Panc1 (cell line): ENCODE measurements at regions of chr2 and their contacts with region 1.

Region 1: GRCh38 chr2:219459460-219460311 is 25.0 kb downstream of the SPEG start:
- DNase-seq: peak; percentile 59
- ATAC-seq: peak; percentile 85
- H3K4me3 ChIP-seq: no peak overlapping the region
- H3K27ac ChIP-seq: no peak overlapping the region
- H3K4me1 ChIP-seq: peaks cover 3% of the 10 kb centered on the region; the same call in 1 of the 2 replicates
- H3K27me3 ChIP-seq: no peaks in the 10 kb centered on the region
- CTCF ChIP-seq: peak; percentile 95

Region 2: GRCh38 chr2:218257390-218257981 is 1202.2 kb before region 1 on chr2:
- CTCF ChIA-PET with region 1: interaction called, 10 read pairs
- POLR2A ChIA-PET with region 1: no interaction called
- in situ Hi-C with region 1: no loop called
- intact Hi-C with region 1: no loop called
- DNase-seq: no peak
- ATAC-seq: no peak
- H3K4me3 ChIP-seq: no peak overlapping the region
- H3K27ac ChIP-seq: no peak overlapping the region
- H3K4me1 ChIP-seq: peaks cover 8% of the 10 kb centered on the region; the same call in 1 of the 2 replicates
- H3K27me3 ChIP-seq: no peaks in the 10 kb centered on the region
- CTCF ChIP-seq: peak; percentile 77; the same call in 1 of the 2 replicates

Region 3: GRCh38 chr2:219509780-219510511 is 50.3 kb after region 1 on chr2:
- CTCF ChIA-PET with region 1: interaction called, 11 read pairs
- POLR2A ChIA-PET with region 1: no interaction called
- in situ Hi-C with region 1: no loop called
- intact Hi-C with region 1: no loop called
- DNase-seq: no peak
- ATAC-seq: peak; percentile 91
- H3K4me3 ChIP-seq: peak overlapping the region; percentile 33 to 49
- H3K27ac ChIP-seq: no peak overlapping the region
- H3K4me1 ChIP-seq: peaks cover 22% of the 10 kb centered on the region
- H3K27me3 ChIP-seq: no peaks in the 10 kb centered on the region; the same call in 1 of the 2 replicates
- CTCF ChIP-seq: peak; percentile 94

Region 4: DNA sequence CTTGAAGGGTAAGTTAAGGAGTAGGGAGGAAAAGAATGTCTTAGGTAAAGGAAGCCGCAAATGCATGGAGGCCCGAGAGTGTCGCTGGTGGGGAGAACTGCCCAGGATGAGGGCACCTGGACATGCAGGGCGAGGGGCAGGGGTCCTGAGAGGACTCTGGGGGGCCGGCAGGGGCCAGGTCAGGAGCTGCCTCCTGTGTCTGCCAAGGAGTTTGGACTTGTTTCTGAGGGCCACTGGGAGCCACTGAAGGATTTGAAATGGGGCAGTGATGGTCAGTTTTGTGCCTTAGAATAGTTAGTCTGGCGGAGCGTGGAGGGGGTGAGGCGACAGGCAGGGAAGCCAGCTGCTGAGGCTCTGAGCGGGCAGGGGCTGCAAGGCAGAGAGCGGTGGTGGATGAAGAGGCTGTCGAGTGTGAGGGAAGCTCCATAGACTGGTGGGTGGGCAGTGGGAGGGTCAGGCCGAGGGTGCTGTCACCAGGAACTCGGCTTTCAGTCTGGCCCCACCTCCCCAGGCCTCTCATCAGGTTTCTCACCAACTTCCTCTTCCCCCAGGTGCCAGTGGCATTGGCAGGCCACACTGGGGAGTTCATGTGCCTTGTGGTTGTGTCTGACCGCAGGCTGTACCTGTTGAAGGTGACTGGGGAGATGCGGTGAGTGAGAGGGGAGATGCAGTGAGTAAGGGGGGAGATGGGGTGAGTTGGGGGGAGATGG is 153.0 kb after region 1 on chr2:
- CTCF ChIA-PET with region 1: no interaction called
- POLR2A ChIA-PET with region 1: no interaction called
- in situ Hi-C with region 1: no loop called
- intact Hi-C with region 1: no loop called
- DNase-seq: no peak
- ATAC-seq: no peak
- H3K4me3 ChIP-seq: no peak overlapping the region
- H3K27ac ChIP-seq: no peak overlapping the region
- H3K4me1 ChIP-seq: no peaks in the 10 kb centered on the region
- H3K27me3 ChIP-seq: no peaks in the 10 kb centered on the region
- CTCF ChIP-seq: no peak